ENCODE measurements at regions of chr6 and their contacts with region 1.

Region 1: DNA sequence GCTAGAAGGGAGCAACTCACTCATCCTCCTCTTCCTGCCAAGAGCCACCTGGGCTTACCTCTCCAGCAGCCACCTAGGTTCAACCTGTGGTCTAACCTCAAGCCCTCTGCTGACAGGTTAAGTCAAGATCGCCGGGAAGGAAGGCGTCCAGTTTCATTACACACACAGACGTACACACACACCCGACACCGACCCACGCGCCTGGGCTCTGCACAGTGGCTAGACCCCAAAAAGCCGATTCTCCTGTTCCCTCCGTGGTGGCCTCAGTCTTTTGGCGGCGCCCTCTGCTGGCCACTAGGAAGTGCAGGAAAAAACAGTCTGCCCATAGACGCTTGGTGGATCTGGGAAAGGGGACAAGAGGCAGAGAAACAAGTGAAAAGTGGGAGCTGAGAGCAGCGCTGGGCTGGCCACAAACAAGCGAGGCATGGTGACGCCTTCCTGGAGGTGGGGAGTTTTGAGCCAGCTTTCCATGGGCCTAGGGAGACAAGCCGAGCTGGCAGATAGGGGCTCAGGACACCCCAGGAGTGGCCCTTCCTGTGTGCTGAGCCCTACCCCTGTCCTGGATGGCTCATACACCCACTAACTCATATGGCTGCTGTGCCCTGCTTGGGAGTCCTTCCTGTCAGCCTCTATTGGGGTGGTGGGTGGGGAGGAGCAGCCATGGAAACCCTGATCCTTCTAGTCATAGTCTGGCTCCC is 52.7 kb downstream of the MRPL14 start:
- DNase-seq: peak; percentile 88
- ATAC-seq: peak; percentile 72

Region 2: DNA sequence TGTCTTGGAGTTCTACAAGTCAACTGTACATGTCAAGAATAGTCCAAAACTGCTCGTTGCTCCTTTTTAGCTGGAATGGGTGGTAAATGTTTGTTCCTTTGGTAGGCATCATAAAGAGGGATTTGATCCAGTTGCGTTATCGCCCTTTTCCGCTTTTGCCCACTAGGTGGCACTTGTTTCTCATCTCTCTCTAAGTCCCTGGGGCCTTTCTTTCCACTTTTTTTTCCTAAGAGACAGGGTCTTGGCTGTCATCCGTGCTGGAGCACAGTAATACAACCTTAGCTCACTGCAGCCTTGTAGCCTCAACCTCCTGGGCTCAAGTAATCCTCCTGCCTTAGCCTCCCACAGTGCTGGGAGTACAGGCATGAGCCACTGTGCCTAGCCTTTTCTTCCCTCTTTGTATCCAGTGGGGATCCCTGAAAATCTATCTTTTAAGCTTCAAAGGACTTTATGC is 466.3 kb before region 1 on chr6:
- intact Hi-C with region 1: loop called (anchors 1 kb)
- DNase-seq: no peak
- ATAC-seq: peak; percentile 57

Region 3: DNA sequence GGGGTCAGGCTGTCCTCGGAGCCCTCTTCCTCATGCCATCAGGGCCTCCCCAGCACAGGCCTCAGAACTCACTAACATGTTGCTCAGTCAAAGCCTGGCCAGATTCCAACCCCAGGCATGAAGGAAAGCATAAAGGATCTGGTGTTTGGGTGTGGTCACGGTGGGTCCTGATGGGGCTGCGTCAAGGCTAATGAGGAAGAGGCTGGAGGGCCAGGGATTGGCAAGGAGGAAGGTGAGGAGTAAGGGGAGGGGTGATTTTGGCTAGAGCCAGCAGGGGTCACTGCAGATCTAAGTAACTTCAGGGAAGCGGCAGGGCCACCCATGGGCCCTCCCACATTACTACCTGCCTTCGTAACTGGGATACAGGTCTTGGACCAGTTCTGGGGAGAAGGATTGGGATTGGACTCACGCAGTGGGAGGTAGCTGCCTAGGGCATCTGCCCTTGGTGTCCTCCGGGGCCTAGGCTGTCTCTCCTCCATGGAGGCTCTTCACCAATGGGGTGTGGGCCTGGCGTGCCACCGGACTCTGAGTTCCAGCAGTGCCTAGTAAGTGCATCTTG is 350.8 kb before region 1 on chr6:
- intact Hi-C with region 1: loop called (anchors 2 kb)
- DNase-seq: peak; percentile 76
- ATAC-seq: peak; percentile 76

Region 4: DNA sequence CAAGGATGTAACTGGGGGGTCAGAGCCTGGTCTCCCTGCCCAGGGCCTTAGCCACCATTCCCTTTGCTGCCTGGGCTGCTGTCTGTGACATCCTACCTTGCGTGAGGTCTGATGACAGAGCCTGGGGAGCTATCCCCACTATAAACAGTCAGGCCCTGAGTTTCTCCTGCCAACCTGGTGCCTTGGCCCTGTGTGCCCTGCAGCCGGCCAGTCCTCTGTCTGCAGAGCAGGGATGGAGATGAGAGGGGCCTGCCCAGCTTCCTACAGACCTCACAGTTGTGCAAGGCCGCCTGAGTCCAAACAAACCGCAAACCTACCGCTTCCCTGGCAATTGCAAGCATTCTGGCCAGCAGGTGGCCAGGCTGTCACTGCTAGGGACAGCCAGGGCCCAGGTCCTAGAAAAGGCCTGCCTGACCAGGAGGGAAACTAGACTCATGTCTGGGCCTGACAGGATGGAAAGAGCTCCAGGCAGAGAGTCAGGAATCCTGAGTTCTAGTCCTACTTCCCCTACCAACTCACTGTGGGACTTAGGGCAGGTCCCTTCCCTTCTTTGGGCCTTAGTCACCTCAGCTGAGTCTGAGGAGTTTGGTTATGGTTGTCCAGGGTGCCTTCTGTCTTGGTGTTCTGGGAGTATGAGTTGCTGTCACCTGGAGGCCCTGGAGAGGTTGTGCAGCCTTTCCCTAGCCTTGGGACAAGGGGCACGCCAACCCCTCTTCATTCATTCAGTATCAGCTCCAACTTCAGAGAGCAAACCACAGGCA is 218.4 kb before region 1 on chr6:
- intact Hi-C with region 1: loop called (anchors 5 kb)
- DNase-seq: no peak
- ATAC-seq: peak; percentile 57

Region 5: GRCh38 chr6:43993881-43994523 is 80.6 kb before region 1 on chr6:
- intact Hi-C with region 1: loop called (anchors 1 kb)
- DNase-seq: no peak
- ATAC-seq: peak; percentile 23

Region 6: DNA sequence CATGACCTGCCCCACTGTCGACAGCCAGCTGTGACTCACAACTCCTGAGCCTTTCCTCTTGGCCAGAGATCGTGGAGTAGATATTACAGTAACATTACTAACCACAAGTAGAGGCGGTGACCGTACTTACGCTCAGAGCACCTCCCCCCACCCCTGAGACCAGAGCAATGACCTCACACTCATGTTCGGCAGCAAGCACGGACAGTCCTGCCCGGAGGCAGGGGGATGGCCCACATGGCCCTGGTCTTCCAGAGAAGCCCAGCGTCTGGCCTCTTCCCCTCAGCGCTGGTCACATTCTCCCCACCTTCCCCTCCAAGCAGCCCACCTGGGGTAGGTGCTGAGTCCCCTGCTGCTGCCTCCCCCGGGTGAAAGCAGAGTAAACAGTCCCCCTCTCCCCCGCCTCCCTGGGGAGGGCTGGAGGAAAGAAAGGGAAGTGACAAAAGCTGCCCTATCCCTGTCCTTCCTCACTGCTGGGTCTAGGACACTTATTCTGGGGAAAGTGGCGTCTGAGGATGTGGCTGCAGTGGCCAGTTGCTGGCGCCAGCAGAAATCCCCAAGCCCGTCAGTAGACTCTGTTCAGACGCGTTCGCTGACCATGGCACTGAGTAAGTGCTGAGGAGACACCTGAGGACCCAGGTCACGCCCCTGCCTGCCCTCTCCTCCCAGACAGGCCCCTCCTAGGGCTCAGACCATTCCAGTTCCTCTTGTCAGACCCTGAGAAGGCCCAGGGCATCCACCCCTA is 15.8 kb before region 1 on chr6:
- intact Hi-C with region 1: no loop called
- DNase-seq: peak; percentile 88
- ATAC-seq: peak; percentile 74

Region 7: GRCh38 chr6:44096612-44097011 is 22.0 kb after region 1 on chr6:
- intact Hi-C with region 1: no loop called
- DNase-seq: peak; percentile 85
- ATAC-seq: peak; percentile 64

Measured in Right ventricle myocardium inferior (tissue), 1 donor.